IMR-90 (cell line): ENCODE measurements at regions of chr12 and their contacts with region 1.

Region 1: GRCh38 chr12:24596768-24597388 is 352.0 kb downstream of the BCAT1 start:
- DNase-seq: peak; percentile 58
- ATAC-seq: peak; percentile 76
- H3K4me3 ChIP-seq: no peak overlapping the region
- H3K27ac ChIP-seq: no peak overlapping the region
- H3K4me1 ChIP-seq: no peaks in the 10 kb centered on the region; the same call in 1 of the 2 replicates
- H3K27me3 ChIP-seq: no peaks in the 10 kb centered on the region
- CTCF ChIP-seq: peak; percentile 70
- POLR2A ChIP-seq: no peak
- RAD21 ChIP-seq: peak; percentile 75

Region 2: DNA sequence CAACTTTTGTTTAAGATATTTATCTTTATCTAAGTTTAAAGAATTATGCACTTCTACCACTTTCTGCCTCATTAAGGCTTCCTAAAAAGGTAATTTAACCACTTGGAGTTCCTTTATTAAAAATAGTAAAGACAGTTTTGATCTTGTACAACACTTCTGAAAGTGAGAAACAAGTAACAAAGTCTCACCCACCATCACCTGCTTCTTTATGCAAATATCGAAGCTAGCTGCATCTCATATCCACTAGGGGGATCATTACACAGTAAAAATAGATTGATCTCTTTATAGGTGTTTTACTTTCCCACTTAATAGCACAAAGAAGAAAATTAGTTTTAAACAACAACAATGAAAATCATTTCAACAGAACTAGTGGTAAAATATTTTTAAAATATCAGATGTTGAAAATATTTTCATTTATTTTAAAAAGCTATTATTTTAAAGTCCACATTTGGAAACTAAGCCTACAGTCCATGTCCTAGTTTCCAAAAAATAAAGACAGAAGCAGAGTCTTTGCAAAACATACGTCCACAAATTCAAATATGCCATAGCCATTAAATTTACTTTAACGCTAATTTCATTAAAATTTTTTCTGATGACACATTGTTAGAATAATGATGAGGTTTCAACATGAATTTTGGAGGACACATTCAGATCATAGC is 487.4 kb before region 1 on chr12:
- CTCF ChIA-PET with region 1: no interaction called
- POLR2A ChIA-PET with region 1: no interaction called
- dilution Hi-C with region 1: no loop called
- in situ Hi-C with region 1: no loop called
- intact Hi-C with region 1: loop called (anchors 2 kb)
- DNase-seq: peak; percentile 32
- ATAC-seq: peak; percentile 42; the same call in 1 of the 2 replicates
- H3K4me3 ChIP-seq: no peak overlapping the region
- H3K27ac ChIP-seq: no peak overlapping the region
- H3K4me1 ChIP-seq: peaks cover 2% of the 10 kb centered on the region; the same call in 1 of the 2 replicates
- H3K27me3 ChIP-seq: no peaks in the 10 kb centered on the region
- CTCF ChIP-seq: peak; percentile 57
- POLR2A ChIP-seq: no peak
- RAD21 ChIP-seq: peak; percentile 54

Region 3: GRCh38 chr12:24360907-24361306 is 236.0 kb before region 1 on chr12:
- CTCF ChIA-PET with region 1: interaction called, 3 read pairs
- POLR2A ChIA-PET with region 1: no interaction called
- dilution Hi-C with region 1: no loop called
- in situ Hi-C with region 1: no loop called
- intact Hi-C with region 1: loop called (anchors 5 kb)
- DNase-seq: peak; percentile 19
- ATAC-seq: peak; percentile 58
- H3K4me3 ChIP-seq: no peak overlapping the region
- H3K27ac ChIP-seq: no peak overlapping the region
- H3K4me1 ChIP-seq: peaks cover 6% of the 10 kb centered on the region
- H3K27me3 ChIP-seq: no peaks in the 10 kb centered on the region
- CTCF ChIP-seq: no peak
- POLR2A ChIP-seq: no peak
- RAD21 ChIP-seq: no peak

Region 4: DNA sequence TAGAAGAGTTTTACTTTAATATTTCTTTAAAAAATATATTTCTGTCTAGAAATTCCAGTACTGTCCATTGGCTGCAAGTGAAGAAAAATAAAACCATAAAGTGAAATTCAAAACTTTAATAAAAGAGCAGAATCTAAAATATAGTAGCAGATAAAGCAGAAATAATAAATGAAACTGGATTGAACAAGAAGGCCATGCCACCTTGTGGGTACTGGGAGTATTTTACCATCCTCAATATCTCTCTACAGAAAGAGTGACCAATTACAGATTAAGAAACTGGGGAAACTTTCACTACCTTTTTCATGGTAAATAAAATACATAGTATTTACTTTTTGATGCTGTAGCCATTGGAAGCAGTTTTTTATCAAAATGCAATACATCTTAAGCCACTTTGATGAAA is 131.5 kb after region 1 on chr12:
- CTCF ChIA-PET with region 1: no interaction called
- POLR2A ChIA-PET with region 1: no interaction called
- dilution Hi-C with region 1: no loop called
- in situ Hi-C with region 1: no loop called
- intact Hi-C with region 1: loop called (anchors 2 kb)
- DNase-seq: peak; percentile 55
- ATAC-seq: peak; percentile 74
- H3K4me3 ChIP-seq: no peak overlapping the region
- H3K27ac ChIP-seq: no peak overlapping the region
- H3K4me1 ChIP-seq: no peaks in the 10 kb centered on the region; the same call in 1 of the 2 replicates
- H3K27me3 ChIP-seq: no peaks in the 10 kb centered on the region
- CTCF ChIP-seq: peak; percentile 71
- POLR2A ChIP-seq: no peak
- RAD21 ChIP-seq: peak; percentile 78